CD8-positive, alpha-beta T cell (primary cell): ENCODE measurements at regions of chr4 and their contacts with region 1.

Region 1: DNA sequence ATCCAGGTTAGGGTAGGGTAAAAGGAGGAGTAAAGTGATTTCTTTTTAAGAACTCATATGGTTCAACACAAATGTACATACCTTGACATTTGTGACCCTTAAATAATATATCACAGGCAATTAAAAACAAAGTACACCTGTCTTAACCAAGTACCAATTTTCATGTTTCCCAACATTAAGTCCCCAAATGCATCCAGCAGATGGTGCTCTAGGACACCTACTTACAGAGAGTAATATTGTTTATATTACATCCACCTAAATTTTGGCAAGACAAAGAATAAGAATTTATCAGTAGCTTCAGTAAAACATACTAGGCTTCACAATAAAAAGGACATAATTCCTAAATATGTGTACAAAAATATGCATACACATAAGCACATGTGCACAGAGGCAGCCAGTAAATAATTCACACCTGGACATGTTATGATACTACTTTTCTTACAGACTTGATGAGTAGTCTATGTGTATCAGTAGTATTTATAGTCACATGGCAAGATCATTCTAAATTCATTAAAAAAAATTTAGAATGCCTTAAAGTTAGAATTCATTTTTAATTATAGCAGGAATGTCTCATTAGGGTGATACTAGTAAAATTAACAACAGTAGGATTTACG is 219.7 kb downstream of the DCLK2 start:
- DNase-seq: peak in 5 of 9 experiments; percentile 17 to 41 (median 23)
- ATAC-seq: no peak
- H3K4me3 ChIP-seq: no peak overlapping the region
- H3K4me3 Mint-ChIP-seq: no peak overlapping the region
- H3K27ac ChIP-seq: no peak overlapping the region
- H3K27ac Mint-ChIP-seq: no peak overlapping the region
- H3K4me1 ChIP-seq: no peaks in the 10 kb centered on the region
- H3K4me1 Mint-ChIP-seq: peaks cover 1% of the 10 kb centered on the region
- H3K27me3 ChIP-seq: no peaks in the 10 kb centered on the region
- H3K27me3 Mint-ChIP-seq: no peaks in the 10 kb centered on the region
- CTCF ChIP-seq: peak; percentile 46

Region 2: GRCh38 chr4:150593996-150594395 is 296.0 kb after region 1 on chr4:
- CTCF ChIA-PET with region 1: no interaction called
- POLR2A ChIA-PET with region 1: no interaction called
- intact Hi-C with region 1: loop called in 1 of 2 experiments (anchors 10 kb)
- DNase-seq: no peak
- ATAC-seq: no peak
- H3K4me3 ChIP-seq: no peak overlapping the region
- H3K4me3 Mint-ChIP-seq: no peak overlapping the region
- H3K27ac ChIP-seq: no peak overlapping the region
- H3K27ac Mint-ChIP-seq: no peak overlapping the region
- H3K4me1 ChIP-seq: no peaks in the 10 kb centered on the region
- H3K4me1 Mint-ChIP-seq: no peaks in the 10 kb centered on the region
- H3K27me3 ChIP-seq: no peaks in the 10 kb centered on the region
- H3K27me3 Mint-ChIP-seq: no peaks in the 10 kb centered on the region
- CTCF ChIP-seq: no peak

Region 3: GRCh38 chr4:151882072-151882803 is 1584.3 kb after region 1 on chr4:
- CTCF ChIA-PET with region 1: no interaction called
- POLR2A ChIA-PET with region 1: no interaction called
- intact Hi-C with region 1: no loop called
- DNase-seq: peak in 1 of 9 experiments; percentile 11
- ATAC-seq: no peak
- H3K4me3 ChIP-seq: no peak overlapping the region
- H3K4me3 Mint-ChIP-seq: no peak overlapping the region
- H3K27ac ChIP-seq: no peak overlapping the region
- H3K27ac Mint-ChIP-seq: peak overlapping the region; percentile 75
- H3K4me1 ChIP-seq: no peaks in the 10 kb centered on the region
- H3K4me1 Mint-ChIP-seq: peaks cover 18% of the 10 kb centered on the region
- H3K27me3 ChIP-seq: no peaks in the 10 kb centered on the region
- H3K27me3 Mint-ChIP-seq: no peaks in the 10 kb centered on the region
- CTCF ChIP-seq: no peak